Left ventricle myocardium inferior (tissue), 1 donor: ENCODE measurements at regions of chr6 and their contacts with region 1.

Region 1: DNA sequence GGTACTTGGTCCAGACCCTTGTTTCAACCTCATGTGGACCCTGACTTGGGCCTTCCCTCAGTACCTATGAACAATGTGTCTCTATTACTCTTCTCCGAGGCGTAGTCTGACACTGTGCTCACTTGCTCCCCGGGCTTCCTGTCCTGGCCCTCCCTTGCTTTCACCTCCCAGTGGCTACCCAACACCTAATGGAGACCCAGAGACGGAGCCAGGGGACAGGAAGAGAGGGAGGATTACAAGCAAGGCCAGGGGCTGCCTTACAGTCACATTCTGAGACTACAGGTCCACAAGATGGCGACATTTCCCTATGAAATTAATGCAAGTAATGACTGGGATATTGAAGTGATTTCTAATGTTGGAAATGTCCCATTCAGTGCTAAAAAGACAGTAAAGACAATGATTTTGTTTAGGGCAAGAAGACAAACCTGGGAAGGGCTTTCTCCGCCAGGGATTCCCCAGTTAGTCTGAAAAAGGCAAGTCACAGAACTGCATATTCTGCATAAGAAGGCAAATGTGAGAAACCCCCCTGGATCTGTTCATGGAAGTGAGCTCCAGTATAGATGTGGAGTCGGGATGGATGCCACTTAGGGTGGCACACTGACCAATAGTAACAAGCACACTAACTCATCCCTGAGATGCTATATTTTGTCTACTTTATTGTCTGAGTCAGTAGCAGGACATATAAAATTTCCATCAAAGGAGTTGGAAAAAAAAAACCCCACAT is 44.0 kb upstream of the ZBTB24 start:
- DNase-seq: no peak
- H3K4me3 ChIP-seq: no peak overlapping the region
- H3K27ac ChIP-seq: no peak overlapping the region
- H3K4me1 ChIP-seq: peaks cover 5% of the 10 kb centered on the region
- H3K27me3 ChIP-seq: no peaks in the 10 kb centered on the region
- CTCF ChIP-seq: peak; percentile 65

Region 2: DNA sequence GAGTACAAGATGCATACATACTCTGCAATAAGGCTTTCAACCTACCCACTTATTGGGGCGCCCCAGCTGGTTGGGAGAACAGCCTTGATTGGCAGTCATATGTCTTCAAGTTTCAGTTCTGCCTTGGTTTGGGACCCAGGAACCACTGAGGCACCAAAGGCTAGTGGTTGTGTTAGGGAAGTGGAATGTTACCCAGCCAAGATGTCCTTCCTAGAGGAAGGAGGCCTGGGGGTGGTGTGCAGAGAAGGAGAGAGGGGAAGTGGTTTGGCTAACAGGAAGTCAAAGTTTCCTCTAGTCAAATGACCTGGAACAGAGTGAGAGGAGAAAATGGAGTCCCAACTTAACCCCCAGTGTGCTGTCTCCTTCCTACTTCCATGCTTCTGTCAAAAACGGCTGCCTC is 204.2 kb before region 1 on chr6:
- intact Hi-C with region 1: no loop called
- DNase-seq: peak; percentile 21
- H3K4me3 ChIP-seq: no peak overlapping the region
- H3K27ac ChIP-seq: no peak overlapping the region
- H3K4me1 ChIP-seq: peaks cover 7% of the 10 kb centered on the region
- H3K27me3 ChIP-seq: no peaks in the 10 kb centered on the region
- CTCF ChIP-seq: no peak

Region 3: GRCh38 chr6:109998159-109998785 is 471.2 kb after region 1 on chr6:
- intact Hi-C with region 1: no loop called
- DNase-seq: no peak
- H3K4me3 ChIP-seq: no peak overlapping the region
- H3K27ac ChIP-seq: no peak overlapping the region
- H3K4me1 ChIP-seq: no peaks in the 10 kb centered on the region
- H3K27me3 ChIP-seq: peaks cover 40% of the 10 kb centered on the region
- CTCF ChIP-seq: no peak

Region 4: GRCh38 chr6:110053395-110054240 is 526.6 kb after region 1 on chr6:
- intact Hi-C with region 1: loop called (anchors 10 kb)
- DNase-seq: no peak
- H3K4me3 ChIP-seq: no peak overlapping the region
- H3K27ac ChIP-seq: no peak overlapping the region
- H3K4me1 ChIP-seq: no peaks in the 10 kb centered on the region
- H3K27me3 ChIP-seq: peaks cover 10% of the 10 kb centered on the region
- CTCF ChIP-seq: peak; percentile 79